ENCODE measurements at regions of chr17 and their contacts with region 1.

Region 1: GRCh38 chr17:52383493-52384100 is 225.1 kb upstream of the CA10 start:
- DNase-seq: peak in 8 of 10 donors; percentile 17 to 90 (median 48)

Region 2: GRCh38 chr17:51516924-51517323 is 866.7 kb before region 1 on chr17:
- intact Hi-C with region 1: no loop called
- DNase-seq: no peak

Region 3: GRCh38 chr17:54172096-54172984 is 1788.7 kb after region 1 on chr17:
- intact Hi-C with region 1: loop called (anchors 5 kb)
- DNase-seq: peak in 6 of 10 donors; percentile 9 to 81 (median 38)